Caco-2 (cell line): ENCODE measurements at regions of chr10 and their contacts with region 1.

Region 1: GRCh38 chr10:58781873-58782488 is 269.3 kb downstream of the BICC1 start:
- DNase-seq: peak in 1 of 2 experiments; percentile 78
- H3K4me3 ChIP-seq: no peak overlapping the region
- H3K4me3 Mint-ChIP-seq: no peak overlapping the region
- H3K27ac Mint-ChIP-seq: peak overlapping the region; percentile 60
- H3K4me1 ChIP-seq: peaks cover 31% of the 10 kb centered on the region
- H3K4me1 Mint-ChIP-seq: peaks cover 38% of the 10 kb centered on the region
- H3K27me3 ChIP-seq: no peaks in the 10 kb centered on the region
- H3K27me3 Mint-ChIP-seq: no peaks in the 10 kb centered on the region
- CTCF ChIP-seq: peak; percentile 71 to 83

Region 2: DNA sequence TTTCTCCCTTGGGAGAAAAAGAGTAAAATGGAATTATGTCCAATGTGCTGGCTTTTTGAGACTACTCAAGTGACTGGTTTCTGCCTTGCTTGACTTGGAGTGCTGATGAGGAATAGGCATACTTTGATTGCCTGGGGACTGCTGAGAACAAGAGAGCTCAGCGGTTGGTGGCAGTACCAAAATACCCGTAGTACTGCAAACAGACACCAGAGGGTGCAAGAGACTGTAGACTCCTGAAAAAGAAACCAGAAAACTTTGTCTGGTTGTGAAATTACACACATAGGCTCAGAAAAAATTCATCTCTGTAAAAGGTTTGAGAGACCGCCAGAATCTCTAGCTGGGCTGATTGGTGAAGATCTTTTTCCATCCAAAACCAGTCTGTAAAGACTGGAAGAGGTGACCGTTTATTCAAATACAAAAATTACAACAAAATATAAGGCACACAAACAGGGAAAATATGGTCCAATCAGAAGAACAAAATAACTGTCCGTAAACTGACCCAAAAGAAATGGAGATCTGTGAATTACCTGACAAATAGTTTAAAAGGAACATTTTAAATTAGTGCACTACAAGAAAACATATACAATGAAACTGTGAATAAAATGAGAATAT is 250.8 kb before region 1 on chr10:
- CTCF ChIA-PET with region 1: interaction called, 4 read pairs
- POLR2A ChIA-PET with region 1: no interaction called
- intact Hi-C with region 1: loop called (anchors 1 kb)
- DNase-seq: peak; percentile 82 to 93
- H3K4me3 ChIP-seq: no peak overlapping the region
- H3K4me3 Mint-ChIP-seq: no peak overlapping the region
- H3K27ac Mint-ChIP-seq: peak overlapping the region; percentile 15
- H3K4me1 ChIP-seq: peaks cover 8% of the 10 kb centered on the region; the same call in 1 of the 2 replicates
- H3K4me1 Mint-ChIP-seq: peaks cover 28% of the 10 kb centered on the region
- H3K27me3 ChIP-seq: no peaks in the 10 kb centered on the region
- H3K27me3 Mint-ChIP-seq: no peaks in the 10 kb centered on the region
- CTCF ChIP-seq: peak; percentile 92 to 97

Region 3: GRCh38 chr10:58813573-58813972 is 31.6 kb after region 1 on chr10:
- CTCF ChIA-PET with region 1: interaction called, 3 read pairs
- POLR2A ChIA-PET with region 1: no interaction called
- intact Hi-C with region 1: loop called (anchors 1 kb)
- DNase-seq: peak; percentile 81 to 84
- H3K4me3 ChIP-seq: no peak overlapping the region
- H3K4me3 Mint-ChIP-seq: peak overlapping the region; percentile 67
- H3K27ac Mint-ChIP-seq: peak overlapping the region; percentile 85
- H3K4me1 ChIP-seq: peaks cover 69% of the 10 kb centered on the region
- H3K4me1 Mint-ChIP-seq: peaks cover 80% of the 10 kb centered on the region
- H3K27me3 ChIP-seq: no peaks in the 10 kb centered on the region
- H3K27me3 Mint-ChIP-seq: no peaks in the 10 kb centered on the region
- CTCF ChIP-seq: no peak

Region 4: DNA sequence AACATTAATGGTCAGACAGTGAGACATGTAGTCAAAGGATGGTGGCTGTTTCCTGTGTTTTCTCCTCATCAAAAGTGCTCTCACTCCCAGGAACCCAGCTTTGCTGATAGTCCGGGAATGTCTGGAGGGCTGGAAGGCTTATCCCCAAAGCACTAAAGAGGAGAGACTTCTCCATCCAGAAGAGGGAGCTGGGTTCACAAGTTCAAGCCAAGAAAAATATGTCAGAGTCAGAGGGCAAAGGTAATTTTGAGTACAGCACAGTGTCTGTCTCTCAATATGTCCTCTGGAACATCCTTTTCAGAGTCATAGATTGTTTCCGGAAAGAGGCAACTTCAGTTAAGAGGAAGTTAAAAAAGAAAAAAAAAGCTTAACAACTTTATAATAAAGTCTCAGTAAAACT is 112.9 kb after region 1 on chr10:
- CTCF ChIA-PET with region 1: interaction called, 3 read pairs
- POLR2A ChIA-PET with region 1: no interaction called
- intact Hi-C with region 1: loop called (anchors 1 kb)
- DNase-seq: peak; percentile 64 to 68
- H3K4me3 ChIP-seq: no peak overlapping the region
- H3K4me3 Mint-ChIP-seq: no peak overlapping the region
- H3K27ac Mint-ChIP-seq: peak overlapping the region; percentile 40
- H3K4me1 ChIP-seq: peaks cover 27% of the 10 kb centered on the region
- H3K4me1 Mint-ChIP-seq: peaks cover 13% of the 10 kb centered on the region
- H3K27me3 ChIP-seq: no peaks in the 10 kb centered on the region
- H3K27me3 Mint-ChIP-seq: no peaks in the 10 kb centered on the region
- CTCF ChIP-seq: peak in 1 of 2 experiments; percentile 59

Region 5: DNA sequence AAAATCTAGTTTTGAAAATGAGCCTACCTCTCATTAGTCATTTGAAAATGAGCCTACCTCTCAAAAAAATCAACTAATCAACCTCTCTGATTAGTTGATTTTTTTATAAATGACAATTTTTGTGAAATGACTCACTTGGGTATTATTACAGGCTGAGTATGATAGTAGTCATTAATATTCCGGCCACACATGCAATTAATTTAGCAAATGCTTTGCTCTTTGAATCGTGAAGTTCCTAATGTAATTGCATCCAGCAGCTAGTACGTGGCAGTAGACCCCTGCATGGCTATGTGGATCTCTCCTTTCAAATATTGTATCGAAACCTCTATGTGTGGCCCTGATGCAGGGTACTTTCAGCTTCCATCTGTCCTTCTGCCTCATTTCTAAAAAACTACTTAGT is 148.5 kb after region 1 on chr10:
- CTCF ChIA-PET with region 1: no interaction called
- POLR2A ChIA-PET with region 1: no interaction called
- intact Hi-C with region 1: no loop called
- DNase-seq: no peak
- H3K4me3 ChIP-seq: no peak overlapping the region
- H3K4me3 Mint-ChIP-seq: no peak overlapping the region
- H3K27ac Mint-ChIP-seq: no peak overlapping the region
- H3K4me1 ChIP-seq: no peaks in the 10 kb centered on the region
- H3K4me1 Mint-ChIP-seq: no peaks in the 10 kb centered on the region
- H3K27me3 ChIP-seq: no peaks in the 10 kb centered on the region
- H3K27me3 Mint-ChIP-seq: no peaks in the 10 kb centered on the region
- CTCF ChIP-seq: no peak

Region 6: GRCh38 chr10:59465088-59465487 is 683.1 kb after region 1 on chr10:
- CTCF ChIA-PET with region 1: no interaction called
- POLR2A ChIA-PET with region 1: no interaction called
- intact Hi-C with region 1: loop called (anchors 1 kb)
- DNase-seq: peak in 1 of 2 experiments; percentile 29
- H3K4me3 ChIP-seq: no peak overlapping the region
- H3K4me3 Mint-ChIP-seq: no peak overlapping the region
- H3K27ac Mint-ChIP-seq: no peak overlapping the region
- H3K4me1 ChIP-seq: no peaks in the 10 kb centered on the region
- H3K4me1 Mint-ChIP-seq: no peaks in the 10 kb centered on the region
- H3K27me3 ChIP-seq: no peaks in the 10 kb centered on the region; the same call in 1 of the 2 replicates
- H3K27me3 Mint-ChIP-seq: peaks cover 10% of the 10 kb centered on the region
- CTCF ChIP-seq: peak; percentile 25 to 57